ENCODE measurements at regions of chr2 and their contacts with region 1.

Region 1: DNA sequence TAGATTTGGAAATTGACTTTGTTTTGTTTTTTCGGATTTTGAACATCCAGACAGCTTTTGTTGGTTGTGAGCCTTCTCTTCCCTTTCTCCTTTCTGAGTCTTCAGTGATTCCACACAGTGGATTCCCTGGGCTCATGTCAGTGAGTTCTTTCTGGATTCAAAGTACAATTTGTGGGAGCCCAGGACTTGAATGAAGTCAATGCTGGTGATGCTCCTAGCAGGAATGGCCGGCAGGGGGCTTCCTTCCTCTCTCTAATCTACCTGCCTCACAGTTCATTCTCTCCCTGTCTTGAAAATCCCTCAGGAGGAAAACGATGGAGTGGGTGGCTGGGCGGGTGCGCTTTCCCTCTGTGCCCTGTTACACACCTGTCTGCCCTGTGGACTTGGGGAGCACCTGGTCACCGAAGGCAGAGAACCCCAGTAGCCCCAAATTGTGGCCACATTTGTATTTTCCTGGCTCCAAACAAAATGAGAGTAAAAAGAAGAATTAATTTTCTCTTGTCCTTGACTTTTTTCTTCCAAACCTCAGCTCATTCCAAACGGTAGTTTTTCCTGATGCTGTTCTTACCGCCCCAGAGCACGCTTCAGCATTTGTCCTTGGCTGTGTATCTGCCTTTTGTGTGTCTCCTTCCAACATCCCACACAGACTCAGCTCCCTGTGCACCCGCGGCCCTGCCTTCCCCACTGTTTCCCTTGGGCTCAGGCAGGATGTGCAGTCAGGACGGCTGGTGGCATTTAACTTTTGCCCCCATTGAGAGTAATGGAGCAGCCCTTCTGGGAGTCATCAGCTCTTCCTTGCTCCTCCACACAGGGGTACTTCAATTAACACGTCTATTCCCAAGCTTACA is 86.6 kb downstream of the MARCO start:
- DNase-seq: peak in 1 of 6 donors; percentile 25
- ATAC-seq: peak in 3 of 4 donors; percentile 31 to 67 (median 67)
- H3K4me3 ChIP-seq: no peak overlapping the region
- H3K27ac ChIP-seq: no peak overlapping the region
- H3K4me1 ChIP-seq: no peaks in the 10 kb centered on the region
- H3K27me3 ChIP-seq: no peaks in the 10 kb centered on the region
- CTCF ChIP-seq: peak in 1 of 4 donors; percentile 26

Region 2: GRCh38 chr2:119264781-119265692 is 236.5 kb after region 1 on chr2:
- intact Hi-C with region 1: loop called in 1 of 3 experiments (anchors 10 kb)
- DNase-seq: peak in 4 of 6 donors; percentile 35 to 67 (median 56)
- ATAC-seq: peak; percentile 75 to 96 (median 94)
- H3K4me3 ChIP-seq: no peak overlapping the region
- H3K27ac ChIP-seq: no peak overlapping the region
- H3K4me1 ChIP-seq: no peaks in the 10 kb centered on the region
- H3K27me3 ChIP-seq: no peaks in the 10 kb centered on the region
- CTCF ChIP-seq: peak; percentile 63 to 77 (median 69)

Measured in pancreas (tissue), 10 donors.